HEK293 (cell line): ENCODE measurements at regions of chr19 and their contacts with region 1.

Region 1: GRCh38 chr19:40365613-40366401 is 17.3 kb downstream of the PLD3 start:
- H3K4me3 ChIP-seq: peak overlapping the region; percentile 41
- H3K27ac ChIP-seq: peak overlapping the region; percentile 54; the same call in 1 of the 2 replicates
- H3K4me1 ChIP-seq: peaks cover 27% of the 10 kb centered on the region
- CTCF ChIP-seq: no peak

Region 2: DNA sequence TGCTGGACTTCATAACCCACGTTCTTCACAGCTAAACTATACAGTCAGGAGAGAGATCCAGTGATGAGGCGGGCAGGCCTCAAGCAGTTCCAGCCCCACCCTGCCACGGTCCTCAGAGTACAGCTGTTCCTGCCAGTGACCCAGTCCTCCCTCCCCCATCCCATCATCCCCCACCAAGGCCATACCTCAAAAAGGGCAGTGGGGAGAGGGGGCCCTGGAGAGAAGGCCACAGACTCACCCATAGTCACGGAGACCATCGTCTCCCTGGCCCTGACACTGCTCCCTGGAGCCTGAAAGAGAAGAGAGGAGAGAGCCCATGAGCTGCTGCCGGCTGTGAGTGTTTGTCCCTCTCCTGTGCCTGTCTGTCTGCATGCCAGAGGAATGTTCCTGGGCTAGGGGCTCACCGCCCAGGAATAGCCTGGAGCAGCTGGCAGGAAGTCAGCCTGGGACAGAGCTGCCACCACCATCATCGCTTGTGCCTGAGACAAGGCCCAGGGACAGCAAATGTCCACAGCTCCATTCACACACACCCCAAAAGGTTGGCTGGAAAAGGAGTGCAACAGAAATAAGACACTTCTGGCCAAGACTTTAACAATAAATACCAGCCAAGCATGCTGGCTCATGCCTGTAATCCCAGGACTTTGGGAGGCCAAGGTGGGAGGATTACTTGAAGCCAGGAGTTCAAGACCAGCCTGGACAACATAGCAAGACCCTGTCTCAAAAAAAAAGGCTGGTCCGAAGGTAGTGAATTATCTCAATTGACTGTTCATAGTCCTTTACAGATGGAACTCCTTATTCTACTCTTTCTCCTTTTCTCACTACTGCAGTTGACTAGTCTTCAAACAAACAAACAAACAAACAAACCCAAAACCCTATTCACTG is 24.0 kb before region 1 on chr19:
- CTCF ChIA-PET with region 1: no interaction called
- POLR2A ChIA-PET with region 1: interaction called, 10 read pairs
- H3K4me3 ChIP-seq: no peak overlapping the region
- H3K27ac ChIP-seq: peak overlapping the region; percentile 46; the same call in 1 of the 2 replicates
- H3K4me1 ChIP-seq: no peaks in the 10 kb centered on the region
- CTCF ChIP-seq: no peak

Region 3: GRCh38 chr19:40381321-40381720 is 15.5 kb after region 1 on chr19:
- CTCF ChIA-PET with region 1: interaction called, 4 read pairs
- POLR2A ChIA-PET with region 1: interaction called, 10 read pairs
- H3K4me3 ChIP-seq: no peak overlapping the region
- H3K27ac ChIP-seq: no peak overlapping the region
- H3K4me1 ChIP-seq: no peaks in the 10 kb centered on the region
- CTCF ChIP-seq: peak; percentile 61

Region 4: DNA sequence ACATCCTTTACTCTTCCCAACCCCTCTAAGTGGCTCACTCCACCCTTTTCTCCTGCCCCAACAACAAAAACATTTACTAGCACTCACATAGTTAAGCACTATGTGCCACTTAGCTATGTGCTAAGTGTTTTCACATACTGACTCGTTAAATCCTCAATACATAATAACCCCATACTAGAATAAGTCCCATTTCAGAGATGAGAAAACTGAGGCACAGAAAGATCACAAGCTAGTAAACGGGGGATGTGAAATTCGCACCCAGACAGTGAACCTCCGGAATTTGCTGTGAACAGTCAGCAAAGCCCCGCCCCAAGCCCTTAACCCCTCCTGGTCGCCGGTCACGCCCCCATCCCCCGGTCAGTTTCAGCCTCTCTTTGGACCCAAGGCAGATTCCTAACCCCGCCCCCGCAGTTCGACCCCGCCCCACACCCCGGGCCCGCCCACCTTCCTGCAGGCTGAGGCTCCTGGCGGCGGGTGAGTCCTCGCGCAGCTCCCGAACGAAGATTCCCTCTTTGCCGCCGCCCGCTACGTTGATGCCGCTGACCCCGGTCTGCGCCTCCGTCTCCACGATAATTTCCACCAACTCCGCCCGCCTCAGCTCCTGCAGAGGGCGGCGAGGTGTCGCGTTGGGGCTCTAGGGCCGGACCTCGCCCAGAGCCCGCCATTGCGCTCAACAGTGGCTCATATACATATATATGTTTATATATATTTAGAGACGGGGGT is 37.6 kb after region 1 on chr19:
- CTCF ChIA-PET with region 1: interaction called, 4 read pairs
- POLR2A ChIA-PET with region 1: interaction called, 10 read pairs
- H3K4me3 ChIP-seq: peak overlapping the region; percentile 50
- H3K27ac ChIP-seq: peak overlapping the region; percentile 80
- H3K4me1 ChIP-seq: peaks cover 9% of the 10 kb centered on the region
- CTCF ChIP-seq: peak; percentile 68; the same call in 1 of the 2 replicates